B cell (primary cell): ENCODE measurements at regions of chr6 and their contacts with region 1.

Region 1: GRCh38 chr6:118565311-118565960 is 17.3 kb downstream of the PLN start:
- DNase-seq: peak; percentile 81
- ATAC-seq: peak; percentile 94
- H3K4me3 ChIP-seq: no peak overlapping the region
- H3K4me3 Mint-ChIP-seq: no peak overlapping the region
- H3K27ac ChIP-seq: peak overlapping the region in 1 of 2 donors; percentile 49
- H3K27ac Mint-ChIP-seq: peak overlapping the region; percentile 5
- H3K4me1 ChIP-seq: peaks cover 6% of the 10 kb centered on the region in 2 donors
- H3K4me1 Mint-ChIP-seq: peaks cover 9% of the 10 kb centered on the region
- H3K27me3 ChIP-seq: no peaks in the 10 kb centered on the region
- H3K27me3 Mint-ChIP-seq: no peaks in the 10 kb centered on the region
- CTCF ChIP-seq: peak; percentile 85

Region 2: DNA sequence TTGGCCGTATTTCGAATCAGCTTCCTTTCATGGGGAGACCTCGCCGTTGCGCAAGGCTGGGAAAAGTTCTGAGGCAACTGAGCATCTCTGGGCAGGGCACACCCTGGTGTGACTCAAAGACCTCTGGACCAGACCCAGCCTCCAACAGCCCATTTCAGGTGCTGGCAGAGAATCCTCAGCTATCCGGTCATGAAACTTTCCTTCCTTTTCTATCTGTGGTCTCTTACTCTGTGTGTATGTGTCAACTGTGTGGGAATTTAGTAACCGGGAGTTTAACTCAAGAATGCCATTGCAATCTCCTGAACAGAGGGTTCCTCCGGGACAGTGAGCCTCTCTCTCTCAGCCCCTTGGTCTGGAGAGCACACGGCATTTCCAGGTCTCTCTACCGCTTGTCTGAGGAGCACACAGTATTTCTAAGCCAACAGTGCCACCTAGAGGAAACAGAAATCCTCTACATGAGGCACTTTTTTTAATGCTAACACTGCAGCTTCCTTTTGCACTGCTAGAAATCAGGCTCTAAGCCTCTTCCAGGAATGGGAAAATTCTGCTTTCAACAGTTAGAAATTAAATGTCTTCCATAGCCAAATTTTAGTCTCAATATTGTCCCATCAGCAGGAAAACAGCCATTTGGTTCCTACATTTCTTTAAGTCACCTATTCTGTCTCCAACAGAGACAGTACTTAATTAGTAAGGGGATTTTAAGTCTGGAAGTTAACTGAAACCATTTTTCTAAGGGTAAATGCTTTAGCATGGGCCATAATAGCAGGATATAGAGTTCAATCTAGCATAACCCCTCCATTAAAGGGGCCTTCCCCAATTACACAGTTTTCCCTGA is 15.4 kb after region 1 on chr6:
- CTCF ChIA-PET with region 1: interaction called, 17 read pairs
- POLR2A ChIA-PET with region 1: no interaction called
- intact Hi-C with region 1: no loop called
- DNase-seq: peak; percentile 47
- ATAC-seq: peak; percentile 24
- H3K4me3 ChIP-seq: no peak overlapping the region
- H3K4me3 Mint-ChIP-seq: no peak overlapping the region
- H3K27ac ChIP-seq: no peak overlapping the region
- H3K27ac Mint-ChIP-seq: no peak overlapping the region
- H3K4me1 ChIP-seq: no peaks in the 10 kb centered on the region
- H3K4me1 Mint-ChIP-seq: peaks cover 4% of the 10 kb centered on the region
- H3K27me3 ChIP-seq: no peaks in the 10 kb centered on the region
- H3K27me3 Mint-ChIP-seq: no peaks in the 10 kb centered on the region
- CTCF ChIP-seq: peak; percentile 49

Region 3: GRCh38 chr6:118618679-118619377 is 53.4 kb after region 1 on chr6:
- CTCF ChIA-PET with region 1: interaction called, 17 read pairs
- POLR2A ChIA-PET with region 1: no interaction called
- intact Hi-C with region 1: loop called (anchors 1 kb)
- DNase-seq: peak; percentile 63
- ATAC-seq: peak; percentile 91
- H3K4me3 ChIP-seq: no peak overlapping the region
- H3K4me3 Mint-ChIP-seq: no peak overlapping the region
- H3K27ac ChIP-seq: no peak overlapping the region
- H3K27ac Mint-ChIP-seq: peak overlapping the region; percentile 38
- H3K4me1 ChIP-seq: peaks cover 0 to 9% of the 10 kb centered on the region in 2 donors
- H3K4me1 Mint-ChIP-seq: peaks cover 21% of the 10 kb centered on the region
- H3K27me3 ChIP-seq: no peaks in the 10 kb centered on the region
- H3K27me3 Mint-ChIP-seq: no peaks in the 10 kb centered on the region
- CTCF ChIP-seq: peak; percentile 89

Region 4: GRCh38 chr6:118709859-118710350 is 144.5 kb after region 1 on chr6:
- CTCF ChIA-PET with region 1: interaction called, 16 read pairs
- POLR2A ChIA-PET with region 1: no interaction called
- intact Hi-C with region 1: no loop called
- DNase-seq: peak; percentile 86
- ATAC-seq: peak; percentile 93
- H3K4me3 ChIP-seq: peak overlapping the region; percentile 59 to 93 (median 83)
- H3K4me3 Mint-ChIP-seq: peak overlapping the region; percentile 97
- H3K27ac ChIP-seq: peak overlapping the region; percentile 62 to 86
- H3K27ac Mint-ChIP-seq: peak overlapping the region; percentile 95
- H3K4me1 ChIP-seq: peaks cover 54 to 58% of the 10 kb centered on the region in 2 donors
- H3K4me1 Mint-ChIP-seq: peaks cover 68% of the 10 kb centered on the region
- H3K27me3 ChIP-seq: no peaks in the 10 kb centered on the region
- H3K27me3 Mint-ChIP-seq: no peaks in the 10 kb centered on the region
- CTCF ChIP-seq: no peak

Region 5: GRCh38 chr6:118776607-118777549 is 211.4 kb after region 1 on chr6:
- CTCF ChIA-PET with region 1: interaction called, 146 read pairs
- POLR2A ChIA-PET with region 1: no interaction called
- intact Hi-C with region 1: loop called (anchors 1 kb)
- DNase-seq: peak; percentile 75
- ATAC-seq: peak; percentile 68
- H3K4me3 ChIP-seq: no peak overlapping the region
- H3K4me3 Mint-ChIP-seq: no peak overlapping the region
- H3K27ac ChIP-seq: no peak overlapping the region
- H3K27ac Mint-ChIP-seq: no peak overlapping the region
- H3K4me1 ChIP-seq: no peaks in the 10 kb centered on the region
- H3K4me1 Mint-ChIP-seq: peaks cover 6% of the 10 kb centered on the region
- H3K27me3 ChIP-seq: no peaks in the 10 kb centered on the region
- H3K27me3 Mint-ChIP-seq: peaks cover 4% of the 10 kb centered on the region
- CTCF ChIP-seq: peak; percentile 89

Region 6: DNA sequence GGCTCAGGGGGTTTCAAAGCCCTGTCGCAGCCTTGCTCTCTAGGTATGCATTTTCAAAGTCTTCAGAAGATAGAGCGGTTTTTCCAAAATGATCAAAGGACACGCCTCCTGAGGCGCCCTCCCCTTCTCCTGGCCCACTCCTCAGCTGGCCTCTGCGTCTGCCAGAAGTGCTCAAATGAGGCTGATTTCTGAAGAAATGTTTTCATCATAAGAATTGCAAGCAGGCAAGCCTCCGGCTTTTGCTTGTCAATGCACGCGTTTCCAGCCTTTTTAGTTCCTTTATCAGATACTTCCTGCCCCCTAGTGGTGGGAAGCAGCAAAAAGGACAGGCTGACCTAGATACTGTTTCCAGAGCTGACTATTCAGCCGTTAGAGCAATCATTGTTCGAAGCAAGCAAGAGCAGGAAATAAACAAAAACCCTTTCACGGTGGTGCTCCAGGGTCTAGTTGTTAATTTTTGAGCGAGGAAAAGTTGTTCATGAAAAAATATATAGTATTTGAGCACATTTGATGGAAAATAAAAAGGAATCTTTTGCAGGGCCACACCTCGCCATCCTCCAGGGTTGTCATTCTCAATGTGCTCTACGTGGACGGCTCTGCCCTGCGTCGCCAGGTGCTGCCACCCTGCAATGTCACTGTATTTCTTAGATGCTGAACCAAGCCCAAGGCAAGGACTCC is 235.1 kb after region 1 on chr6:
- CTCF ChIA-PET with region 1: interaction called, 58 read pairs
- POLR2A ChIA-PET with region 1: no interaction called
- intact Hi-C with region 1: loop called (anchors 1 kb)
- DNase-seq: peak; percentile 81
- ATAC-seq: peak; percentile 92
- H3K4me3 ChIP-seq: peak overlapping the region in 1 of 5 experiments; percentile 5
- H3K4me3 Mint-ChIP-seq: peak overlapping the region; percentile 47
- H3K27ac ChIP-seq: no peak overlapping the region
- H3K27ac Mint-ChIP-seq: no peak overlapping the region
- H3K4me1 ChIP-seq: peaks cover 7 to 18% of the 10 kb centered on the region in 2 donors
- H3K4me1 Mint-ChIP-seq: peaks cover 24% of the 10 kb centered on the region
- H3K27me3 ChIP-seq: no peaks in the 10 kb centered on the region
- H3K27me3 Mint-ChIP-seq: no peaks in the 10 kb centered on the region
- CTCF ChIP-seq: peak; percentile 98